CD4-positive, alpha-beta T cell (primary cell): ENCODE measurements at regions of chr2 and their contacts with region 1.

Region 1: DNA sequence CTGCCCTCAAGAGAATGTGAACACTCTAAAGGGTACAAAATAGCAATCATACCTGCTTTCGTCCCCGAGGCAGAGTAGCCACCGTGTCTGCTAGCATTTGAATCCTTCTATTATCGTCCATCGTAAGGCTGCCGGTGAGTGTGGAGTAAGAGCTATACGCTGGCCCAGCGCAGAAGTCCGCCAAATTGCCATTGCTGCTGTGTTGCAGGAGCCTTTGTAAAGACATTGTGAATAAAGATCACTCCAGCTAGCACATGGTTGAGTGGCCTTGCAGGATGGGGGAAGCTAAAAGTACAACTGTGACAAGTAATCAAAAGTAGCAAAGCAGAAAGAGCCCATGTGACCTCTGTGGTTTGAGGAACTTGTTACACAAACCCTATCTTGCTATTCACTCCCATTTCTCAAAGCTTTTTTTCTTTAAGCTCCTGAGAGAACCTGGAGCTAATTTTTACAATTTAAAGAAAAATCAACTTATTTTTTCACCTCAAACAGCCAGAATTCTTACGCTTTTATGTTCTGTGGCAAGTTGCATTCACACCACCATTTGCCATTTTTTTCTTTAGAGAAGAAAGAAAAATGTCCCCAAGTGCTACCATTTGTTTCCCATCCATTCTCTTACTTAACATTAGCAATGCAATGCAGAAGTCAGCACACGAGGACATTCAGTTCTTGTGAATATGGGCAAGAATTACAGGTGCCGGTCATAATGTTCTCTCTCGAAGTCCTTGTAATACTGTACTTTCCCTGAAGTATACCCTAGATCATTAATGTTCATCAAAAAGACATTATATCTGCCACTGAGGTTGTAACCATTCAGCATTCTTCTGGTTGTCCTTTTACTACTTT is at the start of gene CYTIP:
- DNase-seq: peak in 11 of 14 experiments; percentile 35 to 93 (median 64)
- ATAC-seq: peak; percentile 41
- H3K4me3 ChIP-seq: peak within 1 kb of the TSS; percentile 72
- H3K4me3 Mint-ChIP-seq: peak within 1 kb of the TSS; percentile 95
- H3K27ac ChIP-seq: peak within 1 kb of the TSS; percentile 46 to 97
- H3K27ac Mint-ChIP-seq: peak within 1 kb of the TSS; percentile 97
- H3K4me1 ChIP-seq: peaks cover 9% of the 10 kb centered on the region
- H3K4me1 Mint-ChIP-seq: peaks cover 41% of the 10 kb centered on the region
- H3K27me3 ChIP-seq: no peaks in the 10 kb centered on the region
- H3K27me3 Mint-ChIP-seq: no peaks in the 10 kb centered on the region
- CTCF ChIP-seq: no peak
- total RNA-seq, gene CYTIP: 474 to 490 TPM

Region 2: DNA sequence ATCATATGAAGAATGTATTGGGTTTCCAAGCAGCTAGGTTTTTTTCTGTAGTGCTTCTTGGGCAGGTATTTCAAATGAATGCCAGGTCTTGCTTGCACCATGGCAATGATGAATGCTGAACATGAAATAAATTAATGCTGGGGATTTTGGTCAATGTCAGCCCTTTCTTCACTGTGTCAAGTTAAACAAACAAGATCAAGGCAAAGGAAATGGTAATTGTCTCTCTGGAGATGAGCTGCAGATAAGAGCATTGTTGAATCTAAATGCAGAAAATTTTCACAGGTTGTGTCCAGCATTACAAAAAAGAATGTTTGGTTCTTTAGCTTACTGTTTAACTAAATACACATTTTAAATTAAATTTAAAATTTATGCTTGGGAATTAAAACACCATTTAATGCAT is 863.5 kb before region 1 on chr2:
- CTCF ChIA-PET with region 1: no interaction called
- POLR2A ChIA-PET with region 1: no interaction called
- intact Hi-C with region 1: no loop called
- DNase-seq: peak in 3 of 14 experiments; percentile 11 to 32 (median 18)
- ATAC-seq: no peak
- H3K4me3 ChIP-seq: no peak overlapping the region
- H3K4me3 Mint-ChIP-seq: no peak overlapping the region
- H3K27ac ChIP-seq: no peak overlapping the region
- H3K27ac Mint-ChIP-seq: no peak overlapping the region
- H3K4me1 ChIP-seq: no peaks in the 10 kb centered on the region
- H3K4me1 Mint-ChIP-seq: peaks cover 16% of the 10 kb centered on the region
- H3K27me3 ChIP-seq: no peaks in the 10 kb centered on the region
- H3K27me3 Mint-ChIP-seq: no peaks in the 10 kb centered on the region
- CTCF ChIP-seq: no peak

Region 3: GRCh38 chr2:157327621-157328500 is 116.2 kb before region 1 on chr2:
- CTCF ChIA-PET with region 1: interaction called, 41 read pairs
- POLR2A ChIA-PET with region 1: interaction called, 51 read pairs
- intact Hi-C with region 1: loop called (anchors 1 to 10 kb)
- DNase-seq: peak; percentile 78 to 97 (median 88)
- ATAC-seq: peak; percentile 93
- H3K4me3 ChIP-seq: no peak overlapping the region
- H3K4me3 Mint-ChIP-seq: peak overlapping the region; percentile 61
- H3K27ac ChIP-seq: no peak overlapping the region
- H3K27ac Mint-ChIP-seq: peak overlapping the region; percentile 83
- H3K4me1 ChIP-seq: peaks cover 37% of the 10 kb centered on the region
- H3K4me1 Mint-ChIP-seq: peaks cover 56% of the 10 kb centered on the region
- H3K27me3 ChIP-seq: no peaks in the 10 kb centered on the region
- H3K27me3 Mint-ChIP-seq: no peaks in the 10 kb centered on the region
- CTCF ChIP-seq: peak; percentile 92

Region 4: DNA sequence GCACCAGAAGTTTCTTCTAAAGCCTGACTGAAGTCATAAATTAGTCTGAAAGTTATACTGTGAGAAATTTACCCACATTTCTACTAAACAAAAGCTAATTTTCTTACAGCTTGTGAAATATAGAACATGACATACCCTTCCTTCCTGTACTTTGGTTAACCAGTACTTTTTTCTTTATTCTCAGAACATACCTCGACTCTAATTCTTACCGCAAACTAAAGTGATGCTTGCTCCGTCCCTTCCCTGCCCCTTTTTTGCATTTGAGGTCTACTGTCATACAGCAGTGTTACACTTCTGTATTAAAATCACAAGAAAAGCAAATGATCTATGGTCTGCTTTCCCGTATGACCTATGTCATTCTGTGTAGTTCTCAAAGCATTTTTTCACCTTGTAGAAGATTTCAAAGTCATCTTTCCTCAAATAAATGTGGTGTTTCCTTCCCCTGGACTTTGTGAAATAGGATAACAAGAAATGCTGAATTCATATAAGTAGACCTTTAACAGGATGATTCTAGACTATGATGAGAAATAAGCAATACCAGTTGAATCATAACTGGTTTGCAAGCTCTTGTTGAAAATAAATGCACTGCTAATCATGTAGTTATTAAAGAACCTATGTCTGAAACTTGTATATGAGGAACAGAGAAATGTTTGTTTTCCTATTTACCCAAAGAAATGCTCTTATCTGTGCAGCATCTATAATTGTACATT is 30.5 kb before region 1 on chr2:
- CTCF ChIA-PET with region 1: interaction called, 3 read pairs
- POLR2A ChIA-PET with region 1: interaction called, 384 read pairs
- intact Hi-C with region 1: loop called (anchors 1 to 5 kb)
- DNase-seq: peak in 12 of 14 experiments; percentile 34 to 93 (median 54)
- ATAC-seq: peak; percentile 76
- H3K4me3 ChIP-seq: peak overlapping the region; percentile 6
- H3K4me3 Mint-ChIP-seq: peak overlapping the region; percentile 54
- H3K27ac ChIP-seq: peak overlapping the region; percentile 51 to 79
- H3K27ac Mint-ChIP-seq: peak overlapping the region; percentile 86
- H3K4me1 ChIP-seq: peaks cover 43% of the 10 kb centered on the region
- H3K4me1 Mint-ChIP-seq: peaks cover 92% of the 10 kb centered on the region
- H3K27me3 ChIP-seq: no peaks in the 10 kb centered on the region
- H3K27me3 Mint-ChIP-seq: no peaks in the 10 kb centered on the region
- CTCF ChIP-seq: no peak

Region 5: GRCh38 chr2:157433394-157433793 is 10.6 kb before region 1 on chr2:
- CTCF ChIA-PET with region 1: interaction called, 4 read pairs
- POLR2A ChIA-PET with region 1: interaction called, 87 read pairs
- intact Hi-C with region 1: no loop called
- DNase-seq: no peak
- ATAC-seq: peak; percentile 25
- H3K4me3 ChIP-seq: peak overlapping the region; percentile 72
- H3K4me3 Mint-ChIP-seq: peak overlapping the region; percentile 95
- H3K27ac ChIP-seq: peak overlapping the region; percentile 13 to 97
- H3K27ac Mint-ChIP-seq: peak overlapping the region; percentile 97
- H3K4me1 ChIP-seq: peaks cover 33% of the 10 kb centered on the region
- H3K4me1 Mint-ChIP-seq: peaks cover 93% of the 10 kb centered on the region
- H3K27me3 ChIP-seq: no peaks in the 10 kb centered on the region
- H3K27me3 Mint-ChIP-seq: no peaks in the 10 kb centered on the region
- CTCF ChIP-seq: no peak

Region 6: DNA sequence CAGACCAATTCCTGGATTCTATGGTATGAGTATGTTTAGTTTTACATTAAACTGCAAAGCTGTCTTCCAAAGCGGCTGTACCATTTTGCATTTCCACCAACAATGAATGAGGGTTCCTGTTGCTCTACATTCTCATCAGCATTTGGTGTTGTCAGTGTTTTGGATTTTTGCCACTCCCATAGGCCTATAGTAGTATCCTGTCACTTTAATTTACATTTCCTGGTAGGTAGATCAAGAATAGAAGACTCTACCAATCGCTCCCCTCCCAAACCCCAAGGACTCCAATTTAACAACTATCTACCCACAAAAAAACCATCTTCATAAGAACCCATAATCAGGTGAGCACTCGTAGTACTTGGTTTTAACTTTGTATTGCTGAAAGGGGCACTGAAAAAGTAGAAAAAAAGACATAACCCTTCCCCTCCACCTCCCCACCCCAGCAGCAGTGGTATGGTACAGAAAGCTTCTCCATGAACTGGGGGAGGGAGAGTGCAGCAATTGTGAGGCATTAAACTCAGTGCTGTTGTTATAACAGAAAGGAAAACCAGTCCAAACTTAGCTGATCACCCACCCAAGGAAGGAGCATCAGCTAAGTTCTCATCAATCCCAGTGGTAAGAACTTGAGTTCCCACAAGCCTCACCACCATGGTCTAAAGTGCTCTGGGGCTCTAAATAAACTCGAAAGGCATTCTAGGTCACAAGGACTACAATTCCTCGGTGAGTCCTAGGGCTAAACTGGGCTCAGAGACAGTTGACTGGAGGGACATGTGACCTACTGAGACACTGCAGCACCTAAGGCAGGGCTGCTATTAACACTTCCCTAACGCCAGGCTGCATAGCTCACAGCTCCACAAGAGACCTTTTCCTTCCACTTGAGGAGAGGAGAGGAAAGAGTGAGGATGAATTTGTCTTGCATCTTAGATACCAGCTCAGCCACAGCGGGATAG is 35.3 kb after region 1 on chr2:
- CTCF ChIA-PET with region 1: no interaction called
- POLR2A ChIA-PET with region 1: interaction called, 4 read pairs
- intact Hi-C with region 1: loop called in 1 of 2 experiments (anchors 5 kb)
- DNase-seq: no peak
- ATAC-seq: no peak
- H3K4me3 ChIP-seq: no peak overlapping the region
- H3K4me3 Mint-ChIP-seq: peak overlapping the region; percentile 18
- H3K27ac ChIP-seq: no peak overlapping the region
- H3K27ac Mint-ChIP-seq: peak overlapping the region; percentile 50
- H3K4me1 ChIP-seq: peaks cover 18% of the 10 kb centered on the region
- H3K4me1 Mint-ChIP-seq: peaks cover 43% of the 10 kb centered on the region
- H3K27me3 ChIP-seq: no peaks in the 10 kb centered on the region
- H3K27me3 Mint-ChIP-seq: no peaks in the 10 kb centered on the region
- CTCF ChIP-seq: no peak

Region 7: DNA sequence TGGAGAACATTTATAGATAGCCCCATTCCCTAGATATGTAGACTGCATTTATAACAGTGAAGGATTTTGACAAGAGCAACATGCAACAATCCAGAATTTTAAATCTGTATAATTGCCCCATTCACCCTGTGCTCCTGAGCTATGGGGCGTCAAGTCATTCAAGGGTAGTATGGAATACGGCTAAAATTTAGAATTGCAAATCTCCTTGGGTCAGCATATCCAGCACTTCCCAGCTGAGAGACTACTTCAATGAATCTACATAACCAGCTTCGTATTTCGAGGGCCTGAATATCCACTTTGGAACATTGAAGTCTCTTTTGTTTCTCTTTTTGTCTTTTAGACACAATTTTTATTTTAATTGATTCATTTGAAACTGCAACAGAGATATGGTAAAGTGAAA is 213.1 kb after region 1 on chr2:
- CTCF ChIA-PET with region 1: no interaction called
- POLR2A ChIA-PET with region 1: no interaction called
- intact Hi-C with region 1: no loop called
- DNase-seq: no peak
- ATAC-seq: no peak
- H3K4me3 ChIP-seq: no peak overlapping the region
- H3K4me3 Mint-ChIP-seq: no peak overlapping the region
- H3K27ac ChIP-seq: no peak overlapping the region
- H3K27ac Mint-ChIP-seq: no peak overlapping the region
- H3K4me1 ChIP-seq: no peaks in the 10 kb centered on the region
- H3K4me1 Mint-ChIP-seq: no peaks in the 10 kb centered on the region
- H3K27me3 ChIP-seq: no peaks in the 10 kb centered on the region
- H3K27me3 Mint-ChIP-seq: no peaks in the 10 kb centered on the region
- CTCF ChIP-seq: no peak

Region 8: DNA sequence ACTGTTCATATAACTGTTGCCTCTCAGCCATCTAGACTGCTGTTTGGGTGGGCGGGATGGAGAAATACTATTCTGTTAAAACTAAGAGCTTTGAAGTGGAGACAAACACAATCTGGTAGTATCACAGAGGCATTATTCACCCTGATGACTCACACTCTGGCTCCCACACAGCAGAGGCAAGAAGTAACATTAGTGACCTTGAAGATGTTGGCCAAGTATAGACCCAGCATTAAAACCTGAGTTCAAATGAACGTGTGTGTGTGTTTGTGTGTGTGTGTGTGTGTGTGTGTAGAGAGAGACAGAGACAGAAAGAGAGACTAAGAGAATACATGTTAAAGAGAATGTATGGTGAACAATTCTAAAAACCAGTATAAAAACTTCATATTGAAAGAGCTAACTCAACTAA is 454.6 kb after region 1 on chr2:
- CTCF ChIA-PET with region 1: no interaction called
- POLR2A ChIA-PET with region 1: interaction called, 10 read pairs
- intact Hi-C with region 1: no loop called
- DNase-seq: peak in 13 of 14 experiments; percentile 33 to 73 (median 47)
- ATAC-seq: peak; percentile 62
- H3K4me3 ChIP-seq: peak overlapping the region; percentile 24
- H3K4me3 Mint-ChIP-seq: peak overlapping the region; percentile 55
- H3K27ac ChIP-seq: peak overlapping the region; percentile 49 to 76
- H3K27ac Mint-ChIP-seq: peak overlapping the region; percentile 85
- H3K4me1 ChIP-seq: peaks cover 63% of the 10 kb centered on the region
- H3K4me1 Mint-ChIP-seq: peaks cover 74% of the 10 kb centered on the region
- H3K27me3 ChIP-seq: no peaks in the 10 kb centered on the region
- H3K27me3 Mint-ChIP-seq: no peaks in the 10 kb centered on the region
- CTCF ChIP-seq: no peak

Region 9: GRCh38 chr2:158619496-158619895 is 1175.5 kb after region 1 on chr2:
- CTCF ChIA-PET with region 1: no interaction called
- POLR2A ChIA-PET with region 1: no interaction called
- intact Hi-C with region 1: no loop called
- DNase-seq: no peak
- ATAC-seq: no peak
- H3K4me3 ChIP-seq: no peak overlapping the region
- H3K4me3 Mint-ChIP-seq: no peak overlapping the region
- H3K27ac ChIP-seq: no peak overlapping the region
- H3K27ac Mint-ChIP-seq: no peak overlapping the region
- H3K4me1 ChIP-seq: no peaks in the 10 kb centered on the region
- H3K4me1 Mint-ChIP-seq: no peaks in the 10 kb centered on the region
- H3K27me3 ChIP-seq: no peaks in the 10 kb centered on the region
- H3K27me3 Mint-ChIP-seq: no peaks in the 10 kb centered on the region
- CTCF ChIP-seq: no peak